Caco-2 (cell line): ENCODE measurements at regions of chr16 and their contacts with region 1.

Region 1: DNA sequence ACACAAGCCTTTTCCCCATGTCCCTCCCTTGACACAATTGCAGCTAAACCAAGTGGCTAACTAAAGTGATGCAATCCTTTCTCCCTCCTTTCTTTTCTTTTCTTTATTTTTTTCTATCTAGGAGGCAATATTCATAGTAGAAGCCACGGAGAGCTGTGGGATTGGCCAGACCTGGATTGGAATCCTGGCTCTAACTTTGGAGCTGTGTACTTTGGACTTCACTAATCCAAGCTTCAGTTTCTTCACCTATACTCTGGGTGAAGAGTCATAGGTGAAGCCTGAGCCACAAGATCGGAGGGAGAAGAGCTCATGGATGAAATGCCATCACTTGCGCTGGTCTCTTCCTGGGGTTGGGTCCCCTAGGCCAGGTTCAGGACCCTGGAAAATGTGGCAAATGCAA is 177.2 kb downstream of the IRX5 start:
- DNase-seq: peak; percentile 69 to 76
- H3K4me3 ChIP-seq: no peak overlapping the region
- H3K4me3 Mint-ChIP-seq: peak overlapping the region; percentile 39
- H3K27ac Mint-ChIP-seq: peak overlapping the region; percentile 72
- H3K4me1 ChIP-seq: peaks cover 35% of the 10 kb centered on the region
- H3K4me1 Mint-ChIP-seq: peaks cover 28% of the 10 kb centered on the region
- H3K27me3 ChIP-seq: no peaks in the 10 kb centered on the region
- H3K27me3 Mint-ChIP-seq: no peaks in the 10 kb centered on the region
- CTCF ChIP-seq: no peak

Region 2: DNA sequence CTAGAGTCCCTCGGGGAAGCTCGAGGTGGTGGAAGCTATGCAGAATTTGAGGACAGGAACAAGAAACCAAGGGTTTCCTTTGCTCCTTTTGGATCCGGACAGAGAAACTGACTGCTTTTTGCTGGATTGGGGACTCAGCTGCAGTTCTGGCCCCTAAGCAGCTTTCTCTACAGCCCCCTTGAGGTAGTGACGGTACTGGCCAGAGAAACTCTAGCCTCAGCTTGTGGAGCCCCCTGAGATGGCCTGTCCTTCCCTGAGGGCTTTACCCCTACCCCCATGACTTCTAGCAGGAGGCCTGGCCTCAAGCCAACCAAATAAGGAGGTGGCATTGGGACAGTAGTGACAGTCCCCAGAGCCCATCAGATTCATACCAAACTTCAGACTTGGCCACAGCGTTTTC is 59.1 kb before region 1 on chr16:
- CTCF ChIA-PET with region 1: no interaction called
- POLR2A ChIA-PET with region 1: no interaction called
- intact Hi-C with region 1: loop called (anchors 5 kb)
- DNase-seq: no peak
- H3K4me3 ChIP-seq: no peak overlapping the region
- H3K4me3 Mint-ChIP-seq: no peak overlapping the region
- H3K27ac Mint-ChIP-seq: no peak overlapping the region
- H3K4me1 ChIP-seq: peaks cover 38% of the 10 kb centered on the region
- H3K4me1 Mint-ChIP-seq: peaks cover 38% of the 10 kb centered on the region
- H3K27me3 ChIP-seq: no peaks in the 10 kb centered on the region
- H3K27me3 Mint-ChIP-seq: no peaks in the 10 kb centered on the region
- CTCF ChIP-seq: no peak

Region 3: GRCh38 chr16:55073830-55074229 is 34.0 kb before region 1 on chr16:
- CTCF ChIA-PET with region 1: no interaction called
- POLR2A ChIA-PET with region 1: no interaction called
- intact Hi-C with region 1: loop called (anchors 5 kb)
- DNase-seq: no peak
- H3K4me3 ChIP-seq: no peak overlapping the region
- H3K4me3 Mint-ChIP-seq: no peak overlapping the region
- H3K27ac Mint-ChIP-seq: no peak overlapping the region
- H3K4me1 ChIP-seq: peaks cover 20% of the 10 kb centered on the region
- H3K4me1 Mint-ChIP-seq: peaks cover 10% of the 10 kb centered on the region
- H3K27me3 ChIP-seq: no peaks in the 10 kb centered on the region
- H3K27me3 Mint-ChIP-seq: no peaks in the 10 kb centered on the region
- CTCF ChIP-seq: no peak